IMR-90 (cell line): ENCODE measurements at regions of chrX and their contacts with region 1.

Region 1: DNA sequence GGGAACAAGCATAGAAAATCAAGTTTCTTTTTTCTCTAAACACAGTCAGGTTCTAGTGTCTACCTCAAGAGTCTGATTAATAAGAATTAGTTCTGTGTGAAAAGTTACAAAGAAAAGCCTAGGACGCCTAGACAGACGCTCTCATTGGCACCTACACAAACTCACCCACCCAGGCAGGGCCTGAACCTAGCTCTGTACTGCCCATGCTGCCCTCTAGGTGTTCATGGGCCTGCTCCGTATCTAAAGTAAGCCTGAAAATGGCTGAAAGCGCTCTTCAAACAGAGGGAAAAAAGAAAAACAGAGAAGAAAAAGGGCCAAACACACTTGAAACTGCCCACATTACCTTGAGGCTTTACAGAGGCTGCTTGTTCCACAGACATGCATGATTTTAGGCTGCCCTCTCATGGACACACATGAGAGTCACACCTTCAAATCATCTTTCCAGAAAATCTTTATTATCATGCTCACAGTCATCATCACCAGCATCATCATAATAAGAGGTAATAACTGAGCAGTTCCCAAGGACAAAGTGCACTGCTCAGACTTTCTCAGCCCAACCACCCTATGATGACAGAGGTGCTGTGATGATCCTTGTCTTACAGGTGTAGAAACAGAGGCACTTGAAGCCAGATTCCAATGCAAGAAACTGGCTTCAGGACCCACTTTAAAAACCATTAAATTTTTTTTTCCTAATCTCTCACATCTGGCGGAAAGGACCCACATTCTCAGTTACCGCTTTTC is 49.6 kb downstream of the MAP7D2 start:
- DNase-seq: peak; percentile 70
- ATAC-seq: peak; percentile 85
- H3K4me3 ChIP-seq: no peak overlapping the region
- H3K27ac ChIP-seq: no peak overlapping the region
- H3K4me1 ChIP-seq: peaks cover 2% of the 10 kb centered on the region
- H3K27me3 ChIP-seq: peaks cover 6% of the 10 kb centered on the region
- CTCF ChIP-seq: peak; percentile 64
- POLR2A ChIP-seq: no peak
- RAD21 ChIP-seq: peak; percentile 75

Region 2: GRCh38 chrX:19382555-19383145 is 684.5 kb before region 1 on chrX:
- CTCF ChIA-PET with region 1: no interaction called
- POLR2A ChIA-PET with region 1: no interaction called
- dilution Hi-C with region 1: no loop called
- in situ Hi-C with region 1: loop called (anchors 25 kb)
- intact Hi-C with region 1: loop called (anchors 10 kb)
- DNase-seq: peak; percentile 32
- ATAC-seq: peak; percentile 83
- H3K4me3 ChIP-seq: no peak overlapping the region
- H3K27ac ChIP-seq: no peak overlapping the region
- H3K4me1 ChIP-seq: no peaks in the 10 kb centered on the region
- H3K27me3 ChIP-seq: peaks cover 2% of the 10 kb centered on the region; the same call in 1 of the 2 replicates
- CTCF ChIP-seq: peak; percentile 51
- POLR2A ChIP-seq: no peak
- RAD21 ChIP-seq: peak; percentile 38

Region 3: GRCh38 chrX:19544693-19545305 is 522.3 kb before region 1 on chrX:
- CTCF ChIA-PET with region 1: no interaction called
- POLR2A ChIA-PET with region 1: no interaction called
- dilution Hi-C with region 1: no loop called
- in situ Hi-C with region 1: no loop called
- intact Hi-C with region 1: loop called (anchors 2 kb)
- DNase-seq: peak; percentile 70
- ATAC-seq: peak; percentile 90
- H3K4me3 ChIP-seq: no peak overlapping the region
- H3K27ac ChIP-seq: no peak overlapping the region
- H3K4me1 ChIP-seq: no peaks in the 10 kb centered on the region
- H3K27me3 ChIP-seq: no peaks in the 10 kb centered on the region; the same call in 1 of the 2 replicates
- CTCF ChIP-seq: peak; percentile 81
- POLR2A ChIP-seq: no peak
- RAD21 ChIP-seq: peak; percentile 78

Region 4: DNA sequence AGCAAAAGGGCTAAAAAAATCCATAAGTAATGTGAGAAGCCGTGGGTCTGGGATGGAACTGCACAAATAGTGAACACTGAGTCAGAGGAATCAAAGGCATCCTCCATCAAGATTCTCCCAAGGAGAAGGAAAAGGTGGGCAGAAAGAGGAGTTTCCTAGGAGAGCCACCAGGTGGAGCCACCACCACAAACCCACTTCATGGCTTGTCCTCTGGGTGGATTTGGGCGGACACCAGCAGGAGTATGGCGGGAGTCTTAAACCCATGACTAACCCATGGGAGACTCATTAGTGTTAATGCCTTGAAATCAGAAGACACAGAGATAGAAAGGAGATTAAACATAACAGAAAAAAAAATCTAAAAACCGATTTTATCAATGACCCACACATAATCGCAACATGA is 327.5 kb before region 1 on chrX:
- CTCF ChIA-PET with region 1: no interaction called
- POLR2A ChIA-PET with region 1: no interaction called
- dilution Hi-C with region 1: no loop called
- in situ Hi-C with region 1: no loop called
- intact Hi-C with region 1: loop called (anchors 10 kb)
- DNase-seq: peak; percentile 73
- ATAC-seq: peak; percentile 83
- H3K4me3 ChIP-seq: no peak overlapping the region
- H3K27ac ChIP-seq: no peak overlapping the region
- H3K4me1 ChIP-seq: no peaks in the 10 kb centered on the region
- H3K27me3 ChIP-seq: no peaks in the 10 kb centered on the region
- CTCF ChIP-seq: peak; percentile 72
- POLR2A ChIP-seq: no peak
- RAD21 ChIP-seq: peak; percentile 76

Region 5: DNA sequence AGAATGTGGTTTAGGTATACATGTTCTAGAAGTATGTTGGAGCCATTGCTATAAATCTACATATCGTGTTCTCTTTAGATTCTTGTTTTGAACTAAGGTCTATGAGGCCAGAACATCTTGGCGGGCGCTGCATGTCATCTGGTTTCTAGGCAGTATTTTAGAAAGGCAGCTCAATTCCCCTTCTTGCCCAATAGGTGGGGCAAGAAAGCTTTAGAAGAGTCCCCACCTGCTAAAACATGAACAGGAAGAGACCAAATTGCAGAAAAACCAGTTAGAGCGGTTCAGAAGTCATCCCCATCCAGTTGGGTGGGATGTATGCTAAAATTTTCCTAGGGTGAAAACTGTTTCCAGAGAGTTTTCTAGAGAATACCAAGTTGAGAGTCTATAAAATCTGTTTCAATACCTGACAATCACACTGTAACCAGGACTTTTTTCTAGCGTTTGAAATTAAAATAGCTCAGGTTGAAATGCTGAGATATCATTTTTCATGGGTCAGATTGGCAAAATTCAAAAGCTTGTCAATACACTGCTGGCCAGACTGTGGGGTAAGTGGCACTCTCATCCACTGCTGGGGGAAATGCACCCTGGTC is 162.3 kb before region 1 on chrX:
- CTCF ChIA-PET with region 1: interaction called, 6 read pairs
- POLR2A ChIA-PET with region 1: no interaction called
- dilution Hi-C with region 1: no loop called
- in situ Hi-C with region 1: no loop called
- intact Hi-C with region 1: loop called (anchors 1 kb)
- DNase-seq: peak; percentile 63
- ATAC-seq: peak; percentile 80
- H3K4me3 ChIP-seq: no peak overlapping the region
- H3K27ac ChIP-seq: no peak overlapping the region
- H3K4me1 ChIP-seq: no peaks in the 10 kb centered on the region
- H3K27me3 ChIP-seq: no peaks in the 10 kb centered on the region
- CTCF ChIP-seq: peak; percentile 66
- POLR2A ChIP-seq: no peak
- RAD21 ChIP-seq: peak; percentile 72

Region 6: GRCh38 chrX:19990556-19991349 is 76.4 kb before region 1 on chrX and contains the start of gene BCLAF3:
- CTCF ChIA-PET with region 1: no interaction called
- POLR2A ChIA-PET with region 1: no interaction called
- dilution Hi-C with region 1: no loop called
- in situ Hi-C with region 1: no loop called
- intact Hi-C with region 1: loop called (anchors 1 kb)
- DNase-seq: peak; percentile 79
- ATAC-seq: peak; percentile 97
- H3K4me3 ChIP-seq: peak within 1 kb of the TSS; percentile 83
- H3K27ac ChIP-seq: peak within 1 kb of the TSS; percentile 56
- H3K4me1 ChIP-seq: no peaks in the 10 kb centered on the region; the same call in 1 of the 2 replicates
- H3K27me3 ChIP-seq: no peaks in the 10 kb centered on the region; the same call in 1 of the 2 replicates
- CTCF ChIP-seq: peak; percentile 86
- POLR2A ChIP-seq: no peak
- RAD21 ChIP-seq: peak; percentile 53
- total RNA-seq, gene BCLAF3: 1.6 and 2.8 TPM in 2 replicates